ENCODE measurements at regions of chr10 and their contacts with region 1.

Region 1: DNA sequence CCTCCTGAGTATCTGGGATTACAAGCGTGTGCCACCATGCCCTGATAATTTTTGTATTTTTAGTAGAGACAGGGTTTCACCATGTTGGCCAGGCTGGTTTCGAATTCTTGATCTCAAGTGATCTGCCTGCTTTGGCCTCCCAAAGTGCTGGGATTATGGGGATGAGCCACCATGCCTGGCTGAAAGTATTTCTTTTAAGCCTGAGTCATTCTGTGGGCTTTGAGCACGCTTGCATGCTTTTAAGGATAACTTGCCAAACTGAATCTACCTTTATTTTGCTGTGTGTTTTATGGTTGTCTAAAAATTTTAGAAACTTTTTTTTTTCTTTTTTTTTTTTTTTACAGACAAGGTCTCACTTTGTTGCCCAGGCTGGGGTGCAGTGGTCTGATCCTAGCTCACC is 33.2 kb downstream of the CNNM2 start:
- DNase-seq: no peak
- H3K4me3 ChIP-seq: no peak overlapping the region
- H3K27ac ChIP-seq: no peak overlapping the region
- H3K4me1 ChIP-seq: peaks cover under 1% of the 10 kb centered on the region
- H3K27me3 ChIP-seq: no peaks in the 10 kb centered on the region
- CTCF ChIP-seq: no peak
- POLR2A ChIP-seq: no peak

Region 2: GRCh38 chr10:102962951-102963755 is 11.8 kb after region 1 on chr10:
- intact Hi-C with region 1: loop called (anchors 1 kb)
- DNase-seq: no peak
- H3K4me3 ChIP-seq: no peak overlapping the region
- H3K27ac ChIP-seq: no peak overlapping the region
- H3K4me1 ChIP-seq: peaks cover 11% of the 10 kb centered on the region
- H3K27me3 ChIP-seq: no peaks in the 10 kb centered on the region
- CTCF ChIP-seq: no peak
- POLR2A ChIP-seq: no peak